ENCODE measurements at regions of chr3 and their contacts with region 1.

Region 1: DNA sequence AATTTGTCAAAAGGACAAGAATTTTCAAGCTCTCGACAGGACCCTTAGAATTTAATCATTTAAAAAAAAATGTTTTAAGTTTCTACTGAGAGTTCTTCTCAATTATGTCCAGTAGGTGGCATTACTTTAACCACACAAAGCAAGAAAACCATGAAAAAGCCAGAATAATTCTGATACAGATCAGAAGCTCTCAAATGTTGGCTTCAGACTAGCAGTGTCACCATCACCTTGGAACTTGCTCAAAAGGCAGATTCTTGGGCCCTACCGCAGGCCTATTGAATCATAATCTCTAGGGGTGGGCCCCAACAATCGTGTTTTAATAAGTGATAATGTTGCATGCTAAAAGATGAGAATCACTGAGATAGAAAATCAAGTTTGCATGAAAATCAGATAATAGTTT is 99.5 kb upstream of the KCNMB2 start:
- DNase-seq: peak; percentile 16
- ATAC-seq: no peak
- H3K4me3 ChIP-seq: no peak overlapping the region
- H3K27ac ChIP-seq: no peak overlapping the region
- H3K4me1 ChIP-seq: peaks cover 0 to 5% of the 10 kb centered on the region in 2 experiments; a peak in 1 of 4 replicates
- H3K27me3 ChIP-seq: no peaks in the 10 kb centered on the region
- CTCF ChIP-seq: peak; percentile 32 to 63 (median 62); a peak in 4 of 6 replicates
- POLR2A ChIP-seq: no peak
- RAD21 ChIP-seq: peak; percentile 59

Region 2: GRCh38 chr3:178419071-178419470 is 17.7 kb before region 1 on chr3:
- CTCF ChIA-PET with region 1: interaction called, 13 read pairs
- POLR2A ChIA-PET with region 1: no interaction called
- RAD21 ChIA-PET with region 1: no interaction called
- intact Hi-C with region 1: no loop called
- DNase-seq: no peak
- ATAC-seq: no peak
- H3K4me3 ChIP-seq: no peak overlapping the region
- H3K27ac ChIP-seq: no peak overlapping the region
- H3K4me1 ChIP-seq: no peaks in the 10 kb centered on the region
- H3K27me3 ChIP-seq: no peaks in the 10 kb centered on the region
- CTCF ChIP-seq: no peak
- POLR2A ChIP-seq: no peak
- RAD21 ChIP-seq: no peak

Region 3: DNA sequence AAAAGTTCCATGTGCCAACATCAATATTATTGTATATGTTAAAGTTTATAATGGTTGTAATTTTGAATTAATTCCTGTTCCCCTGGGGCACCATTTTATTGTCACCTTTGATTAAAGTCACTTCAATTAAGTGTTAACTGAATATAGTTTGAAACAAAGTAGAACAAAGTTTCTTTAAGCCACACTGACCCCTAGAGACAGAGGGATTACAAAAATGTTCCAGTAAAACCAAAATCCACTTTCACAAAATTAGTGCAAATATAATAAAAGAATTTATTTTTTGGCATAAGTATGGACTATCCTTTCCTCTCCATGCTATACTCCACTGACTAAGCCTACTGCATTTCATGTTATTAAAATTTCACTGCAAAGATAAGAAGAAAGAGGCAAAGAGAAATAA is 511.0 kb after region 1 on chr3:
- CTCF ChIA-PET with region 1: interaction called, 5 read pairs
- POLR2A ChIA-PET with region 1: no interaction called
- RAD21 ChIA-PET with region 1: no interaction called
- intact Hi-C with region 1: loop called (anchors 5 kb)
- DNase-seq: no peak
- ATAC-seq: no peak
- H3K4me3 ChIP-seq: no peak overlapping the region
- H3K27ac ChIP-seq: no peak overlapping the region
- H3K4me1 ChIP-seq: no peaks in the 10 kb centered on the region
- H3K27me3 ChIP-seq: no peaks in the 10 kb centered on the region
- CTCF ChIP-seq: peak in 1 of 3 experiments; percentile 31; a peak in 2 of 6 replicates
- POLR2A ChIP-seq: no peak
- RAD21 ChIP-seq: peak; percentile 54

Region 4: GRCh38 chr3:178966299-178967176 is 529.8 kb after region 1 on chr3:
- CTCF ChIA-PET with region 1: interaction called, 34 read pairs
- POLR2A ChIA-PET with region 1: no interaction called
- RAD21 ChIA-PET with region 1: no interaction called
- intact Hi-C with region 1: loop called (anchors 1 kb)
- DNase-seq: peak; percentile 29
- ATAC-seq: peak; percentile 61
- H3K4me3 ChIP-seq: no peak overlapping the region
- H3K27ac ChIP-seq: no peak overlapping the region
- H3K4me1 ChIP-seq: peaks cover 0 to 5% of the 10 kb centered on the region in 2 experiments; a peak in 2 of 4 replicates
- H3K27me3 ChIP-seq: no peaks in the 10 kb centered on the region
- CTCF ChIP-seq: peak; percentile 35 to 83 (median 64); a peak in 5 of 6 replicates
- POLR2A ChIP-seq: no peak
- RAD21 ChIP-seq: peak; percentile 89

Region 5: DNA sequence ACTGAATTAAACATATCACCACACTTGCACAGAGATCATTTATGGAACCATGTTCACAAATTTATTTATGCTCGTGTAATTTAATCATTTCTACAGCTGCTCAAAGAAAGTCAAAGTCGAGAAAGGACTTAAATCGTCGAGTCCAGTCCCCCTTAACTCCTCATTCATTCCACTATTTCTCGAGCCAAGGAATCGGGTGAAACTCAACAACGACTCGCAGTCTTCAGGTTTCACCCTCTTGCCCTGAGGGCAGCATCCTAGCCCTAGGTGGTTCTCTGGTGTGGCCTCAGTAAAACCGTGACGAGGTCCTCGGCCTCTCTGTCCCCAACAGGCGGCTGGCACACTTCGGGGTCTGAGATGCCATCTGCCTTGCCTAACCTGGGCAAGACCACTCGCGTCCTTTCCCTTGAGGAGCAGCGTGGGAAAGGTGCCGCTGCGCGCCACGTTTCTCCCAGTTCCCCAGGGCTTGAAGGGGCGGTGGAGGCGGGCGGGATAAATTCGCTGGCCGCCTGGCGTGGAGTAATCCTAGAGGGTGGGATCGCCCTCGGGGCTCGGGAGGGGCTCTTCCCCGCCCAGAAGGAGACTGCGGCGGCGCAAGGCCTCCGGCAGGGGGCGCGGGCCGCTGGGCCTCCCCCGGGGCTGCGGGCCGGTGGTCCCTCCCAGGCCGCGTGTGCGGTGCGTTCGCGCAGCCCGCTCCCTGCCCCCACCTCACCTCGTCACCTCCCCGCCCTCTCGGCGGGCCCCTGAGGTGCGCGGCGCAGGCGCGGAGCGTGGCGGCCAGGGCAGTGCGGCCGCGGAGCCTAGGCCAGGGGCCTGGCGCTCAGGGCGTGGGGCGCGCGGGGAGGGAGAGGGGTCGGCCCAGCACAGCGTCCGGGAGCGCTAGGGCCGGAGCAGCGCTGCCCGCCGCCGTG is 885.8 kb after region 1 on chr3 and contains the start of gene ZNF639:
- CTCF ChIA-PET with region 1: interaction called, 5 read pairs
- POLR2A ChIA-PET with region 1: no interaction called
- RAD21 ChIA-PET with region 1: no interaction called
- intact Hi-C with region 1: loop called (anchors 2 kb)
- DNase-seq: peak; percentile 76
- ATAC-seq: peak; percentile 87
- H3K4me3 ChIP-seq: peak within 1 kb of the TSS; percentile 74 to 87
- H3K27ac ChIP-seq: peak within 1 kb of the TSS; percentile 90
- H3K4me1 ChIP-seq: peaks cover 7 to 29% of the 10 kb centered on the region in 2 experiments; a peak in 3 of 4 replicates
- H3K27me3 ChIP-seq: no peaks in the 10 kb centered on the region
- CTCF ChIP-seq: peak; percentile 34 to 74 (median 67); a peak in 5 of 6 replicates
- POLR2A ChIP-seq: peak; percentile 69
- RAD21 ChIP-seq: peak; percentile 42
- total RNA-seq, gene ZNF639: 47.5 TPM